CD4-positive, alpha-beta T cell (primary cell): ENCODE measurements at regions of chr9 and their contacts with region 1.

Region 1: DNA sequence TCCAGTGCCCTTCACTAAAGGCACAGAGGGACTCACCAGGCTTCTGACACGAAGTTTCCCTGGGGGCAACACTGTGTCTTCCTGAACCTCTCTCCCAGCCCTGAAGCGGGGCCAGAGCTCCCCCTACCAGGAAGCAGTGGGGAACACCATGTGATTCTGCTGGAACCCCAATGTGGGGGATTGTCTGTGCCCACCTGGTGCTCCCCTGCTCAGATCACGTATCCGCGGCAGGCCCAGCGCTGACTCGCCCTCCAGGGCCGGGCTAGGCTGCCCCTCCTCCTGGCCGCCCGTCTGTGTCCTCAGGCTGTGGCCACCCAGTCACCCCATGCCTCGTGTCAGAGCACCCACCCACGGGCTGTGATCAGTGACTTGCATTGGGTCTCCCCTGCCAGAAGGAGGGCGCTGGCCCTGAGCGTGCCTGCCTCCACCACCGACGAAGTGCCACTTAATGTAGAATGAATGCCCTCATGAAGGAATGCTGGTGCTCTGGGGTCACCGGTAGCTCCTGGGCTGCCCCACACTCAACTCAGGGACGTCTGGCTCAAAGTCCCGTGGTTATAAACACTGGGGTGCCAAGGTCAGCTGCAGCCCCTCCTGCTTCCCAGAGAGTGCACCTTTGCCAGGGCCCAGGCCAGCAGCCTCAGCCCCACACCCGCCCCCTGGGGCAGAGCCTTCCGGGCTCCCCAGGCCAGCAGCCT is 22.1 kb downstream of the SARDH start:
- DNase-seq: peak in 13 of 14 experiments; percentile 22 to 71 (median 49)
- ATAC-seq: peak; percentile 82
- H3K4me3 ChIP-seq: no peak overlapping the region
- H3K4me3 Mint-ChIP-seq: no peak overlapping the region
- H3K27ac ChIP-seq: no peak overlapping the region
- H3K27ac Mint-ChIP-seq: peak overlapping the region; percentile 42
- H3K4me1 ChIP-seq: peaks cover 8% of the 10 kb centered on the region
- H3K4me1 Mint-ChIP-seq: peaks cover 7% of the 10 kb centered on the region
- H3K27me3 ChIP-seq: no peaks in the 10 kb centered on the region
- H3K27me3 Mint-ChIP-seq: no peaks in the 10 kb centered on the region
- CTCF ChIP-seq: peak; percentile 69

Region 2: GRCh38 chr9:133449760-133450159 is 266.3 kb before region 1 on chr9:
- CTCF ChIA-PET with region 1: no interaction called
- POLR2A ChIA-PET with region 1: no interaction called
- intact Hi-C with region 1: no loop called
- DNase-seq: no peak
- ATAC-seq: no peak
- H3K4me3 ChIP-seq: no peak overlapping the region
- H3K4me3 Mint-ChIP-seq: no peak overlapping the region
- H3K27ac ChIP-seq: no peak overlapping the region
- H3K27ac Mint-ChIP-seq: no peak overlapping the region
- H3K4me1 ChIP-seq: no peaks in the 10 kb centered on the region
- H3K4me1 Mint-ChIP-seq: no peaks in the 10 kb centered on the region
- H3K27me3 ChIP-seq: peaks cover 0 to 2% of the 10 kb centered on the region in 2 experiments
- H3K27me3 Mint-ChIP-seq: peaks cover 5% of the 10 kb centered on the region
- CTCF ChIP-seq: no peak

Region 3: GRCh38 chr9:133532937-133533668 is 182.9 kb before region 1 on chr9:
- CTCF ChIA-PET with region 1: no interaction called
- POLR2A ChIA-PET with region 1: no interaction called
- intact Hi-C with region 1: loop called in 1 of 2 experiments (anchors 1 kb)
- DNase-seq: peak; percentile 47 to 83 (median 64)
- ATAC-seq: peak; percentile 82
- H3K4me3 ChIP-seq: no peak overlapping the region
- H3K4me3 Mint-ChIP-seq: peak overlapping the region; percentile 87
- H3K27ac ChIP-seq: no peak overlapping the region
- H3K27ac Mint-ChIP-seq: peak overlapping the region; percentile 85
- H3K4me1 ChIP-seq: peaks cover 26% of the 10 kb centered on the region
- H3K4me1 Mint-ChIP-seq: peaks cover 12% of the 10 kb centered on the region
- H3K27me3 ChIP-seq: peaks cover 0 to 10% of the 10 kb centered on the region in 2 experiments
- H3K27me3 Mint-ChIP-seq: peaks cover 6% of the 10 kb centered on the region
- CTCF ChIP-seq: peak; percentile 32

Region 4: GRCh38 chr9:133589454-133590227 is 126.4 kb before region 1 on chr9:
- CTCF ChIA-PET with region 1: no interaction called
- POLR2A ChIA-PET with region 1: no interaction called
- intact Hi-C with region 1: loop called in 1 of 2 experiments (anchors 2 kb)
- DNase-seq: peak; percentile 24 to 67 (median 38)
- ATAC-seq: peak; percentile 24
- H3K4me3 ChIP-seq: no peak overlapping the region
- H3K4me3 Mint-ChIP-seq: no peak overlapping the region
- H3K27ac ChIP-seq: no peak overlapping the region
- H3K27ac Mint-ChIP-seq: no peak overlapping the region
- H3K4me1 ChIP-seq: peaks cover 14% of the 10 kb centered on the region
- H3K4me1 Mint-ChIP-seq: no peaks in the 10 kb centered on the region
- H3K27me3 ChIP-seq: peaks cover 15 to 21% of the 10 kb centered on the region in 2 experiments
- H3K27me3 Mint-ChIP-seq: peaks cover 16% of the 10 kb centered on the region
- CTCF ChIP-seq: peak; percentile 64

Region 5: DNA sequence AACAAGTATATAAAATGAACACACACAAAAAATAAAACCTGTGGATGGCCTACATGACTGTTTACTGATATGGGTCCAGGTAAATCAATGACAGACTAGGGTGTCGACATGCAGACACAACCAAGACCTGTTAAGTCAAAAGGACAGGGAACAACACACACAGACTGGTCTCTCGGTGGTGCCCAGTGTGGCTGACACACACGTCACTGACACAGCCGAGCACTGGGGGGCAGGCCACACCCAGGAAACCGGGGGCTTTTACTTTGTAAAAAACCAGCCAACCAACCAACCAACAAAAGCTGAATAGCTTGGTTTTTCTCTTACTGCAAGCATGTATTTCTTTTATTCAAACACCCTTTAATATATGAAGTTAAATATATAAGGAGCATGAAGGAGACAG is 111.8 kb before region 1 on chr9:
- CTCF ChIA-PET with region 1: no interaction called
- POLR2A ChIA-PET with region 1: no interaction called
- intact Hi-C with region 1: loop called in 1 of 2 experiments (anchors 5 kb)
- DNase-seq: peak in 11 of 14 experiments; percentile 13 to 58 (median 42)
- ATAC-seq: peak; percentile 46
- H3K4me3 ChIP-seq: no peak overlapping the region
- H3K4me3 Mint-ChIP-seq: no peak overlapping the region
- H3K27ac ChIP-seq: no peak overlapping the region
- H3K27ac Mint-ChIP-seq: no peak overlapping the region
- H3K4me1 ChIP-seq: peaks cover 8% of the 10 kb centered on the region
- H3K4me1 Mint-ChIP-seq: peaks cover 4% of the 10 kb centered on the region
- H3K27me3 ChIP-seq: peaks cover 14 to 24% of the 10 kb centered on the region in 2 experiments
- H3K27me3 Mint-ChIP-seq: peaks cover 19% of the 10 kb centered on the region
- CTCF ChIP-seq: no peak

Region 6: DNA sequence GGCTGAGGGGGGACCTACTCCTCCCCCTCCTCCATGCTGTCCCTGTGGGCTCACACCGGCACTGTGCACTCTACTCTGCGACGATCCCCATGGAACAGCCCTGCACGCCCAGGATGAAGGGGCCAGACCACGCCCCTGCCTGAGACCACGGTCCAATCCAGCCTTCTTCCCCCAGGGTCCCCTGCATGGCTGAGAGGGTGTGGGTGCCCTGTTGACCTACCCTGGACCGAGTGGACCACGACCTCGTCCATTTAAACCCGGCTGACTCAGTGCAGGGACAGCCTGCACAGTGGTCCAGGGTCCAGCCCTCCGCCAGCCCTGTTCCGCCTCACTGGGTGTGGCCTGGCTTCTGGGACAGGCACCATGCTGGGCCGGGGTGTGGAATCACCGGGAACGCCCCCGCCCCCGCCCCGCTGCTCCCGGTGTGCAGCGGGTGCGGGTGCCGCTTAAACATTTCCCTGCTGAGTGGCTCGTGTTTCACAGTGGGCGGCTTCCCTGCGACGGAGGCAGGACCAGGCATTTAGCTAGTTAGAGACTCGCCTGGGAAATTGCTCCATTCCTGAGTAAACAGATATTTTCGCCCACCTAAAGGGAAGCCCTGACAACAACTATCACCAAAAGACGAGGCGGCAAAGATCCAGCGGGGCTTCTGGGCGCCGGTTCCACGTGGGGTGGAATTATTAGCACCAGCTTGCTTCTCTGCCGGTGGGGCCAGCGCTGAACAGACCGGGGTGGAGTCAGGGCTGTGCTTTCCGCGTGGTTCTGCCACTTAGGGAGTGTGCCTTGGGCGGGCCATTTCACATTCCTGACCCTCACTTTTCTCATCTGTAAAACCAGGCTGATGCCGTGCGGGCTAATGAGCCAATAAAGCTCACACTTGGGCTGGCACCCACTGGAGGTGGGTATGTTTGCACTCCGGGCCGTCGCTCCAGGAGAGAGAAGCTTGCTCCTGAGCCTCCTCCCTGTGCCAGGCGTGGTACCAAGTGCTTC is 57.3 kb before region 1 on chr9:
- CTCF ChIA-PET with region 1: interaction called, 5 read pairs
- POLR2A ChIA-PET with region 1: interaction called, 5 read pairs
- intact Hi-C with region 1: loop called in 1 of 2 experiments (anchors 1 kb)
- DNase-seq: peak in 4 of 14 experiments; percentile 7 to 38 (median 26)
- ATAC-seq: no peak
- H3K4me3 ChIP-seq: no peak overlapping the region
- H3K4me3 Mint-ChIP-seq: peak overlapping the region; percentile 69
- H3K27ac ChIP-seq: no peak overlapping the region
- H3K27ac Mint-ChIP-seq: peak overlapping the region; percentile 93
- H3K4me1 ChIP-seq: peaks cover 50% of the 10 kb centered on the region
- H3K4me1 Mint-ChIP-seq: peaks cover 47% of the 10 kb centered on the region
- H3K27me3 ChIP-seq: peaks cover 5 to 18% of the 10 kb centered on the region in 2 experiments
- H3K27me3 Mint-ChIP-seq: peaks cover 33% of the 10 kb centered on the region
- CTCF ChIP-seq: no peak

Region 7: DNA sequence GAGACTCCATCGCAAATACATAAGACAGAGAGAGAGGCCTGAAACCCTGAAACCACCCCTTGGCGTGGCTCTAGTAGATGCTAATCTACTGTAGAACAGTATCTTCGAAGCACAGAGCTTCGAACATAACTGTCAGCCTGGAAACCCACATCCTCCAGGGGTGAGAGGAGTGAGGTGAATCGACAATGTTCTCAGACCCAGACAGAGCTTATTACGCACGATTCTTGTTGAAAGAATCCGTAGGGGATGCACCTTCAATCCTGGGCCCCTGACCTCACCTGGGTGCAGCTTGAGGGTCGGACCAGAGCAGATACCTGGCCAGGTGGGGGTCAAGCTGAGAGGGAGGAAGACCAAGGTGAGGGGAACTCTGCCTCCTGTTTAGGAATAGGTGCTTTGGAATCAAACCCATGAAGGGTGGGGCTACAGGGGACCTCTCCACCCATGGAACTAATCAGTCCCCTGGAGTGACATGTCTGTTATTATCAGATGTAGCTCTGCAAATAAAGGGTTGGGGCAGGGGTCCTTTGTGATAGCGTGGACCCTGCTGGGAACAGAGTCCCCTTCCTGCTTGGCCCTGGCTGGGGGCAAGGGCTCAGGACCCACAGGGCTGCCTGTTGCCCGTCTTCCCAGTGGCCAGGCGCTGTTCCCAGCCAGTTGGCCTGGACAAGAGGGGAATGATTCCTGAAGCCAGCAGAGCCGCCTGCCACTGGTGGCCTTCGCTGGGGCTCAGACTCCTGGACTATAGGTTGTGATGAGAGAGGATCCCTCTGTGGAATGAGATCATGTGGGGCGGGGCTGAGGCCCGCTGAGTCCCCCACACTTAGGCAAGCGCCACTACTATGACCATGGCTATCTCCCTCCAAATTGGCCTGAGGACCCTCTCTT is 38.6 kb before region 1 on chr9:
- CTCF ChIA-PET with region 1: no interaction called
- POLR2A ChIA-PET with region 1: no interaction called
- intact Hi-C with region 1: no loop called
- DNase-seq: peak; percentile 54 to 92 (median 66)
- ATAC-seq: peak; percentile 93
- H3K4me3 ChIP-seq: no peak overlapping the region
- H3K4me3 Mint-ChIP-seq: peak overlapping the region; percentile 65
- H3K27ac ChIP-seq: peak overlapping the region; percentile 83 to 98
- H3K27ac Mint-ChIP-seq: peak overlapping the region; percentile 98
- H3K4me1 ChIP-seq: peaks cover 54% of the 10 kb centered on the region
- H3K4me1 Mint-ChIP-seq: peaks cover 57% of the 10 kb centered on the region
- H3K27me3 ChIP-seq: no peaks in the 10 kb centered on the region
- H3K27me3 Mint-ChIP-seq: no peaks in the 10 kb centered on the region
- CTCF ChIP-seq: no peak

Region 8: GRCh38 chr9:133691626-133692363 is 24.2 kb before region 1 on chr9:
- CTCF ChIA-PET with region 1: no interaction called
- POLR2A ChIA-PET with region 1: no interaction called
- intact Hi-C with region 1: no loop called
- DNase-seq: no peak
- ATAC-seq: peak; percentile 32
- H3K4me3 ChIP-seq: no peak overlapping the region
- H3K4me3 Mint-ChIP-seq: no peak overlapping the region
- H3K27ac ChIP-seq: no peak overlapping the region
- H3K27ac Mint-ChIP-seq: peak overlapping the region; percentile 42
- H3K4me1 ChIP-seq: peaks cover 5% of the 10 kb centered on the region
- H3K4me1 Mint-ChIP-seq: peaks cover 4% of the 10 kb centered on the region
- H3K27me3 ChIP-seq: no peaks in the 10 kb centered on the region
- H3K27me3 Mint-ChIP-seq: no peaks in the 10 kb centered on the region
- CTCF ChIP-seq: no peak

Region 9: DNA sequence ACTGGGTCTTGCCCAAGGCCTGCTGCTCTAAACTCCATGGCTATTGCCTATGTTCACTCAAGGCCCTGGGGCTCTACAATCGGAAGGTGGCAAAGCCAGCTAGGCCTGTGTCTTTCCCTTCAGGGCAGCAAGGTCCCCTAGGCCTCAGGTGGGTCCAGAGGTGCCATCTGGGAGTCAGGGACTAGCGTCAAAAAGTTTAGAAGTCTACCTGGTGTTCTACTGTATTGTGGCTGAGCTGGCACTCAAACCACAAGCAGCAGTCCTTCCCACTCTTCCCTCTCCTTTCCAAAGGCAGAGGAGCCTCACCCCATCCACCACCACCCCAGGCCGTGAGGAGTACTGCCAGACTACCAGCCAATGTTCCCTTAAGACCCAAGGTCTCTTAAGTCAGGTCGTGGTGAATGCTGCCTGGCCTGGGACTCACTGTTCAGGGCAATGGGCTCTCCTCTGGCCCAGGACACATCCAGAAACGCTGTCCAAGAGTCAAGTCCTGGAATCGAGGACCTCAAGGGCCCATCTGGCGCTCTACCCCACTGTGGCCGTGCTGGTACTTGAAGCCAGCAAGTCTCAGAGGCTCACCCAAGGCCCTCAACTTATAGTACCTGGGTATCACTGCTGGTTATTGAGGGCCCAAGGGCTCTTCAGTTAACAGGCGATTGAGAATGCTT is 35.1 kb after region 1 on chr9:
- CTCF ChIA-PET with region 1: no interaction called
- POLR2A ChIA-PET with region 1: no interaction called
- intact Hi-C with region 1: no loop called
- DNase-seq: no peak
- ATAC-seq: no peak
- H3K4me3 ChIP-seq: no peak overlapping the region
- H3K4me3 Mint-ChIP-seq: no peak overlapping the region
- H3K27ac ChIP-seq: no peak overlapping the region
- H3K27ac Mint-ChIP-seq: no peak overlapping the region
- H3K4me1 ChIP-seq: no peaks in the 10 kb centered on the region
- H3K4me1 Mint-ChIP-seq: no peaks in the 10 kb centered on the region
- H3K27me3 ChIP-seq: peaks cover 21 to 22% of the 10 kb centered on the region in 2 experiments
- H3K27me3 Mint-ChIP-seq: peaks cover 64% of the 10 kb centered on the region
- CTCF ChIP-seq: no peak